B cell (primary cell): ENCODE measurements at regions of chr1 and their contacts with region 1.

Region 1: GRCh38 chr1:193121616-193122593 is at the start of gene CDC73:
- DNase-seq: peak; percentile 99
- ATAC-seq: peak; percentile 89
- H3K4me3 ChIP-seq: peak within 1 kb of the TSS; percentile 87 to 99 (median 93)
- H3K4me3 Mint-ChIP-seq: peak within 1 kb of the TSS; percentile 90
- H3K27ac ChIP-seq: peak within 1 kb of the TSS; percentile 82 to 93
- H3K27ac Mint-ChIP-seq: peak within 1 kb of the TSS; percentile 93
- H3K4me1 ChIP-seq: peaks cover 20 to 21% of the 10 kb centered on the region in 2 donors
- H3K4me1 Mint-ChIP-seq: peaks cover 40% of the 10 kb centered on the region
- H3K27me3 ChIP-seq: no peaks in the 10 kb centered on the region
- H3K27me3 Mint-ChIP-seq: no peaks in the 10 kb centered on the region
- CTCF ChIP-seq: peak; percentile 92
- total RNA-seq, gene CDC73: 71.7 and 77.2 TPM in 2 replicates

Region 2: DNA sequence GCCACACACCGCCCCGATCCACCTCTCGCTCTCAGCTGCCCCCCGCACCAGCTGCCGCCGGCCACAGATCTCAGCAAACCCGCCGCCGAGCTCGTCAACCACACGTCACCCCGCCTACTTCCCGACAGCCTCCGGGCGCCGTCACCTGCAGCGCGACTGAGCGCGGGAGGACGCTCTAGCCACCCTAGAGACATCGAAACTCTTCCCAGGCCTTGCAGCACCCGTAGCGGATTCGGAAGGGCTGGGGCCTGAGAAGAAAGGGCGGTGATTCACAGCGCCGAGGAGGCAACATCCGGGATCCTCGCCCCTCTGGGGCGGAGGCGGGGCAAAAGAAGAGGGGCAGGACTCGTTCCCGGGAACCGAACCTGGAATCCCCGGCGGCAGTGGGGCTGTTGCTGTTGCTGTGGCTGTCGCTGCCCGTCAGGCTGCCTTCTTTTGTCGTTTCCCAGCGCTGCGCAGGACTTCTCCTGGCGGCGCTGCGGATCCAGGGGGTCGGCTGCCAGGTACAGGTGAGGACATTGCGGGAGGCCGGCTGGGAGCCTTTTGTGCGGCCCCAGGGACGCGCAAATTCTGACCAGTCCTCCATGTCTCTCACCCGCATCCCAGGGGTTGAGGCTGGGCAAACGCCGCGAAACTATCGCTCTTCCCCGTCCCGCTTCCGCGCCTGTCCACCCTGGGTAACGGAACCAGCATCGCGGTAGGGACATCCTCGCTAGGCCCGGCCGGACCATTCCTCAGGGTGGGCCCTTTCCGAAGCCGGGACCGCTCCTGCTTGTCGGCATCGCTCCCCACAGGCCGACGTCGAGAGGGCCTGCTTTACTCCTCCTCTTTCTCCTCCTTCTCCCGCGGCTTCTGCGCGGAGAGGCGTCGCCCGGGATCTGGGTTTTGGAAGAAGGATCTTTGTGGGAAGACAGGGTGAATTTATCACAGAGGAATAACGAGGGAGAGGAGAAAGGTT is 62.4 kb before region 1 on chr1 and contains the starts of genes RO60 and UCHL5:
- CTCF ChIA-PET with region 1: interaction called, 20 read pairs
- POLR2A ChIA-PET with region 1: interaction called, 14 read pairs
- intact Hi-C with region 1: loop called (anchors 1 kb)
- DNase-seq: peak; percentile 96
- ATAC-seq: peak; percentile 95
- H3K4me3 ChIP-seq: peak within 1 kb of the TSS; percentile 62 to 99 (median 91)
- H3K4me3 Mint-ChIP-seq: peak within 1 kb of the TSS; percentile 98
- H3K27ac ChIP-seq: peak within 1 kb of the TSS; percentile 89 to 94
- H3K27ac Mint-ChIP-seq: peak within 1 kb of the TSS; percentile 99
- H3K4me1 ChIP-seq: peaks cover 21 to 25% of the 10 kb centered on the region in 2 donors
- H3K4me1 Mint-ChIP-seq: peaks cover 51% of the 10 kb centered on the region
- H3K27me3 ChIP-seq: no peaks in the 10 kb centered on the region
- H3K27me3 Mint-ChIP-seq: no peaks in the 10 kb centered on the region
- CTCF ChIP-seq: no peak
- total RNA-seq, gene RO60: 66.4 and 78.2 TPM in 2 replicates
- total RNA-seq, gene UCHL5: 31.5 and 32.9 TPM in 2 replicates

Region 3: DNA sequence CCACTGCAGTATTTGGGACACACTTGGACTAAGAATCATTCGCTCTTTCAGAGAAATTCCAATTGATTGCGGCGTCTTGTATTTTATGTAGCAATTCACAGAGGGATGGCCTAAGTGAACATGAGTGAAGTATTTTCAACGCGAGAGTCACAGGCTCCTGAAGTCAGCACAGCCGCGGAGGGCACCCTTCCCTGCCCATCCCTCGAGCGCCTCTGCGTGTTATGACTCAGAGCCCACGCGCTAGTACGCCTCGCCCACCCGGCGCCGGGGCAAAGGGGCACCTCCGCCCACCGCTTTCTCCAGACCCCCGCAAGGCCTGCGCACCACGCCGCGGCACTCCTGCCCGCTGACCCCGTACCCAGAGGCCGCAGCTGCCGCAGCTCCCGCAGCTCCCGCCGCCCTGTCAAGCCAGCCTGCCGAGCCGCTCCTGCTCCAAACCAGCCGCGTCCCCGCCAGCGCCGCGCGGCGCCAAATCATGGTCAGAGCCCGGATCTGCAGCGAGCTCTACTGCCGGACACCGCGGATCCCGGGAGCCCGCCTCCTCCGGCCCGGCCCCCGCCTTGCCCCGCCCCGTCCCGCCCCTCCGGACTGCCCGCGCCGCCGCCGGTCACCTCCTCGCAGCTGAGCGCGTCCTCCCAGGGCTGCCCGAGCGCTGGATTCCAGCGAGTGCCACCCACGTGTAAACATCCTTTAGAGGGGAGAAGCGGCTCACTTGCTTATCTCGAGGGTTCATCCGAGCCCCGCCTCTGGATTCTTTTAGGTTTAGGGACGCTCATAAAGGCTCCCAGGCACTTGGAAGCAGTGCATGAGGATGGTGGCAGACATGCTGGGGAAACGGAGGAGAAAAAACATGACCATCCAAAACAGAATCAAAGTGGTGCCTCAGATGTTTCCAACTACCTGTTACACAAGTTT is 16.7 kb before region 1 on chr1 and contains the start of gene GLRX2:
- CTCF ChIA-PET with region 1: interaction called, 10 read pairs
- POLR2A ChIA-PET with region 1: interaction called, 4 read pairs
- intact Hi-C with region 1: loop called (anchors 1 kb)
- DNase-seq: peak; percentile 65
- ATAC-seq: peak; percentile 83
- H3K4me3 ChIP-seq: peak within 1 kb of the TSS; percentile 62 to 99 (median 78)
- H3K4me3 Mint-ChIP-seq: peak within 1 kb of the TSS; percentile 97
- H3K27ac ChIP-seq: peak within 1 kb of the TSS in 1 of 2 donors; percentile 71
- H3K27ac Mint-ChIP-seq: peak within 1 kb of the TSS; percentile 83
- H3K4me1 ChIP-seq: peaks cover 8 to 13% of the 10 kb centered on the region in 2 donors
- H3K4me1 Mint-ChIP-seq: peaks cover 22% of the 10 kb centered on the region
- H3K27me3 ChIP-seq: no peaks in the 10 kb centered on the region
- H3K27me3 Mint-ChIP-seq: no peaks in the 10 kb centered on the region
- CTCF ChIP-seq: no peak
- total RNA-seq, gene GLRX2: 12.9 and 13.9 TPM in 2 replicates

Region 4: DNA sequence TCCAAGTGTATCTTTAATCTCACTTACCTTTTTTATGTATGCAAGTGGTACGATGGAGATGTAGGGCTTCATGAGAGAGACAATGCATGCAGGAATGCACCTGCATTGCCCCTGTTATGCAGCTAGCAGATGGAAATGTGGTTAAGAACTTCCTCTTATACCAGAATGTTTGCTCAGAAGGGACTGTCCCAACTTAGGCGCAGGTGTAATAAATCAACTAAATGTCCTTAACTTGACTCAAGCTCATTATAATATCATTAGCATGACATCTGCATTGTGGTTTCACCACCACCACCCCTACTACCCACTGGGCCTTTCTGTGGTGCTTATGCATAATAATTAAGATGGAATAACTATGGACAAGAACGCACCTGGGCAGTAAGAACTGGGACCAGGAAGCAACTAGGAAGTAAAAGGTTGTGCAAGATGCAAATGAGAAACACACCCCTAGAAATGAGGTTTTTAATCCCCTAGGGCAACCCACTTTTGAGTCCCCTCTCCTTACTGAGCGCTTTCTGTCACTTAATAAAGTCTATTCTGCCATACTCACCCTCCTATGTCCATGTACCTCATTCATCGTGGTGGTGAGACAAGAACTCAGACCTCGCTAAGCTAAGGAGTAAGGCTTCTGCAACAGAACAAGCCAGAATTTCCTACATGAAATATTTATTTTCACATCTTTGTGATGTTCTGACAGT is 1167.8 kb after region 1 on chr1:
- CTCF ChIA-PET with region 1: no interaction called
- POLR2A ChIA-PET with region 1: no interaction called
- intact Hi-C with region 1: loop called (anchors 1 kb)
- DNase-seq: peak; percentile 91
- ATAC-seq: peak; percentile 93
- H3K4me3 ChIP-seq: peak overlapping the region in 1 of 5 experiments; percentile 8
- H3K4me3 Mint-ChIP-seq: peak overlapping the region; percentile 27
- H3K27ac ChIP-seq: no peak overlapping the region
- H3K27ac Mint-ChIP-seq: peak overlapping the region; percentile 78
- H3K4me1 ChIP-seq: peaks cover 10% of the 10 kb centered on the region in 2 donors
- H3K4me1 Mint-ChIP-seq: peaks cover 20% of the 10 kb centered on the region
- H3K27me3 ChIP-seq: peaks cover 0 to 9% (median 2%) of the 10 kb centered on the region in 4 experiments
- H3K27me3 Mint-ChIP-seq: peaks cover 3% of the 10 kb centered on the region
- CTCF ChIP-seq: no peak